IMR-90 (cell line): ENCODE measurements at regions of chr10 and their contacts with region 1.

Region 1: GRCh38 chr10:78972947-78973900 is 95.5 kb upstream of the ZMIZ1 start:
- DNase-seq: peak; percentile 95
- ATAC-seq: peak; percentile 69
- H3K4me3 ChIP-seq: 0 out of 2 replicates have a peak overlapping the region, but pooled peaks have one; percentile 3
- H3K27ac ChIP-seq: peak overlapping the region; percentile 98
- H3K4me1 ChIP-seq: peaks cover 38% of the 10 kb centered on the region
- H3K27me3 ChIP-seq: no peaks in the 10 kb centered on the region
- CTCF ChIP-seq: no peak
- POLR2A ChIP-seq: peak; percentile 69
- RAD21 ChIP-seq: no peak; the same call in 1 of the 2 replicates

Region 2: GRCh38 chr10:78805176-78805575 is 168.0 kb before region 1 on chr10:
- CTCF ChIA-PET with region 1: no interaction called
- POLR2A ChIA-PET with region 1: no interaction called
- dilution Hi-C with region 1: no loop called
- in situ Hi-C with region 1: no loop called
- intact Hi-C with region 1: loop called (anchors 2 kb)
- DNase-seq: peak; percentile 99
- ATAC-seq: peak; percentile 90
- H3K4me3 ChIP-seq: no peak overlapping the region
- H3K27ac ChIP-seq: peak overlapping the region; percentile 42; the same call in 1 of the 2 replicates
- H3K4me1 ChIP-seq: peaks cover 40% of the 10 kb centered on the region
- H3K27me3 ChIP-seq: peaks cover 11% of the 10 kb centered on the region
- CTCF ChIP-seq: no peak
- POLR2A ChIP-seq: no peak
- RAD21 ChIP-seq: peak; percentile 33; the same call in 1 of the 2 replicates